Activated naive CD4-positive, alpha-beta T cell treated with anti-CD3 and anti-CD28 coated beads for 36 hours (primary cell): ENCODE measurements at regions of chr16 and their contacts with region 1.

Region 1: DNA sequence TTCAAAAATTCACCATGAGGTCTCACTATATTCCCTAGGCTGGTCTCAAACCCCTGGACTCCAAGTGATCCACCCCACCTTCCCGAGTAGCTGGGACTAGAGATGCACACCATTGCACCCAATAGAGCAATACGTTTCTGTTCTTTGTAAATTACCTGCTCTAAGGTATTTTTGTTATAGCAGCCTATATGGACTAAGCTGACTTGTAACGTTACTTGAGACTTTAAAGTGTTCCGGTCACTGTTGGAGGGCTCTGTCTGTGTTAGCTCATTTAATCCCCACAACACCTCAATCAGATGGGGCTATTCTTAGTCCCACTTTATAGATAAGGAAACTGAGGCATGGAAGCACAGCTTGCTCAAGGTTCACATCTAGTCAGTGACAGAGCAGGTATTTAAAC is 25.4 kb downstream of the IL4R start:
- DNase-seq: no peak
- H3K4me3 Mint-ChIP-seq: no peak overlapping the region
- H3K27ac Mint-ChIP-seq: no peak overlapping the region
- H3K4me1 Mint-ChIP-seq: peaks cover 39% of the 10 kb centered on the region
- H3K27me3 Mint-ChIP-seq: no peaks in the 10 kb centered on the region

Region 2: GRCh38 chr16:27355610-27356009 is 16.4 kb after region 1 on chr16:
- CTCF ChIA-PET with region 1: no interaction called
- intact Hi-C with region 1: loop called (anchors 2 kb)
- DNase-seq: peak; percentile 71
- H3K4me3 Mint-ChIP-seq: no peak overlapping the region
- H3K27ac Mint-ChIP-seq: peak overlapping the region; percentile 76
- H3K4me1 Mint-ChIP-seq: peaks cover 13% of the 10 kb centered on the region
- H3K27me3 Mint-ChIP-seq: no peaks in the 10 kb centered on the region